ENCODE measurements at regions of chr17 and their contacts with region 1.

Region 1: DNA sequence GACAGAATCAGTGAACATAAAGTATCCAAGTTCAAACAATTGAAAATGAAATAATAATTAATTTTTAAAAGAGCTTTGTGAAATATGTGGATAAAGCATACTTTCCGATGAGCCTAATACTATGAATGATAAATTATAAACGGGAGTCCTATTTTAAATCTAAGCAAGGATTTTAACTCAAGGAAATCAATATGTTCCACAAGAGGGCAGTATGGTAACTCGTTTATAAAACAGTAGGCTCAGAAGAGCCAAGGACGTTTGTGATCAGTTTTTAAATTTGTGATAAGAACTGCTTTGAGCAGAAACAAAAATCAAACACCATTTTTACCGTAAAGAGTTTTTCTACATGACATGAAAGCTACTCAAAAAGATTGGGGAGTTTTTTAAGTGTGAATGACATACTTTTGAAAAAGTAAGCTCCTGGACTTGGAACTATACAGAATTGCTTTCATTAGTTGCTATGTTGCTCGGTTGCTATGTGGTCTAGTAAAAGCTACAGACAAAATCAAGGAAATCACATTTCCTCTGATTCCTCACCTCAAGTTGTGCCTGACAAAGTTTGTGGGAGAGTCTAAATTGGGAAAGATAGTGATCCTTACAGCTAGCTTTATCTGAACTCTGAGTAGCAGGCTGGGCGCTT is 11.8 kb upstream of the TEKT1 start:
- DNase-seq: no peak
- H3K4me3 ChIP-seq: no peak overlapping the region
- H3K27ac ChIP-seq: no peak overlapping the region
- H3K27me3 ChIP-seq: no peaks in the 10 kb centered on the region
- CTCF ChIP-seq: peak; percentile 47; the same call in 1 of the 2 replicates

Region 2: GRCh38 chr17:6666077-6666521 is 177.3 kb before region 1 on chr17:
- CTCF ChIA-PET with region 1: interaction called, 65 read pairs
- POLR2A ChIA-PET with region 1: no interaction called
- DNase-seq: peak; percentile 60
- H3K4me3 ChIP-seq: no peak overlapping the region
- H3K27ac ChIP-seq: no peak overlapping the region
- H3K27me3 ChIP-seq: peaks cover 28% of the 10 kb centered on the region
- CTCF ChIP-seq: peak; percentile 98

Region 3: DNA sequence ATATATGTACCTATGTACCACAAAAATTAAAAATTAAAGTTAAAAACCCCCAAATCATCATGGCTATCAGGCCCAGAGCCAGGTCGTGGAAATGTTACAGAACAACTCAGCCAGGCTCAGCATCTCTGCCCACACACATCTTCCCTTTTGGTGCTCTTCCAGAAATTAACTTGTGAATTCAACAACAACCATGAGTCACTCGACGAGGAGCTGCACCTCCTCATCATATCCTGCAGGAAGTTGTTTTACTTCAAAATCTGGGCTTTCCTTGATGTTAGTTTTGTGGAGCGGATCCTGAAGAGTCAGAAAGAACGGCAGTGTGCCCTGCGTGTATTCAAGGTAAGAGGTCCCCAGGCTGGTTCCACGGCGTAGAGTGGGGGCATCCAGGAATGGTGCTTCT is 56.7 kb before region 1 on chr17:
- CTCF ChIA-PET with region 1: interaction called, 13 read pairs
- POLR2A ChIA-PET with region 1: no interaction called
- DNase-seq: peak; percentile 13
- H3K4me3 ChIP-seq: no peak overlapping the region
- H3K27ac ChIP-seq: no peak overlapping the region
- H3K27me3 ChIP-seq: peaks cover 10% of the 10 kb centered on the region
- CTCF ChIP-seq: no peak

Region 4: GRCh38 chr17:6868579-6868978 is 25.2 kb after region 1 on chr17:
- CTCF ChIA-PET with region 1: interaction called, 11 read pairs
- POLR2A ChIA-PET with region 1: no interaction called
- DNase-seq: no peak
- H3K4me3 ChIP-seq: no peak overlapping the region
- H3K27ac ChIP-seq: no peak overlapping the region
- H3K27me3 ChIP-seq: peaks cover 7% of the 10 kb centered on the region
- CTCF ChIP-seq: no peak

Region 5: DNA sequence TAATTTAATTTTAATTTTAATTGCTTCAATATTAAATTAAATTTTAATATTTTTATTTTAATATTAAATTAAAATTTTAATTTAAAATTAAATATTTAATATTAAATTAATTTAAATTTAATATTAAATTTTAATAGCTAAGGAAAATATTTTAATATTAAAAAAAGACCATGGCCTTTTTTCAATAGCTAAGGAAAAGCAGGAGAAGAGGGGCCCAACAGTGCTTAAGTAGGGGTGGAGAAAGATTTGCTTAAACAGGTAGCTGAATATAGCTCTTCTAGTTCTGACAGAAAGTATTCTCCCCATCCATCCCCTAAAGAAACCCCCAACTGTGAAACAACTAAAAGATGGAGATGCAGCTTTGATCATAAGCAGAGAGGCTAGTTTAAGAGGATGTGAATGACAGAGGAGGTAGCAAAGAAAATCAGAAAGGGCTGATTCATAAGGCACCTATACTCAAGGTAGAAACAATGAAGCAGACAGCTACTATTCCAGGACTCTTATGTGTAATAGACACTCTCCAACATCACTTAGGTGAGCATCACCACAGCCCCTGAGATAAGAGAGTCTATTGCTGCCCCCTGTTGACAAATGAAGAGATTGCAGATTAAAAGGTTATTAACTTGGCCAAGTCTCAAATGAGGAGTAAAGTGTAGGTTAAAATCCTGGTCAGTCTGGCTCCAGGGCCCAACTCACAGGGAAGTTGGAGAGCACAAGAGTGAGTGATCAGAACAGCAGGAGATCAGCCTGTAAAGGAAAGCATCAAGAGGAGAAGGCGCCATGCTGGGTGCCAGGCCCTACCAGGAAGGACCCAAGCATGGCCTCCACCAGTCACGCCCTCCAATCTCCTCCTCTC is 161.3 kb after region 1 on chr17:
- CTCF ChIA-PET with region 1: interaction called, 27 read pairs
- POLR2A ChIA-PET with region 1: no interaction called
- DNase-seq: no peak
- H3K4me3 ChIP-seq: no peak overlapping the region
- H3K27ac ChIP-seq: no peak overlapping the region
- H3K27me3 ChIP-seq: no peaks in the 10 kb centered on the region
- CTCF ChIP-seq: peak; percentile 69

Region 6: DNA sequence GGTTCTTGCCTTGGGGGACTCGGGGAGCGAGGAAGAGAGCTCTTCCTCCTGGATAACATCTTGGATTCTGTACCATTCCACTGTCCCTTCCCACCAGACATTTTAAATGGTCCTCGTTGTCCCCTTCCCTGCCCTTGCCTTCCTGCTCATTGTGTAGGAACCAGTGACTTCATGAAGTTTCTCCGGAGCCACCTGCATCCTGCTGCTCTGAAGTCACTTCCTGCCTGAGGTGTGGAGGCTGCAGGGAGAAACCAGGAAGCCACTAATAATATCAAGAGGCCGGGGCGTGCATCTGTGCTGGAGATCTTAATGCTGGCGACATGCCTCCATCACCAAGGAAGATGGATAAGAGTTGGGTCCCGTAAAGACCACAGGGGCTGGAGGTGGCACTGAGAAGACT is 186.3 kb after region 1 on chr17:
- CTCF ChIA-PET with region 1: no interaction called
- POLR2A ChIA-PET with region 1: no interaction called
- DNase-seq: no peak
- H3K4me3 ChIP-seq: no peak overlapping the region
- H3K27ac ChIP-seq: no peak overlapping the region
- H3K27me3 ChIP-seq: peaks cover 3% of the 10 kb centered on the region
- CTCF ChIP-seq: no peak